ENCODE measurements at regions of chr1 and their contacts with region 1.

Region 1: GRCh38 chr1:95088303-95088702 is 15.6 kb upstream of the ALG14 start:
- DNase-seq: no peak
- H3K4me3 Mint-ChIP-seq: no peak overlapping the region
- H3K27ac Mint-ChIP-seq: no peak overlapping the region
- H3K4me1 Mint-ChIP-seq: no peaks in the 10 kb centered on the region
- H3K27me3 Mint-ChIP-seq: peaks cover 13% of the 10 kb centered on the region

Region 2: GRCh38 chr1:95057351-95057750 is 31.0 kb before region 1 on chr1:
- intact Hi-C with region 1: loop called (anchors 1 kb)
- DNase-seq: no peak
- H3K4me3 Mint-ChIP-seq: no peak overlapping the region
- H3K27ac Mint-ChIP-seq: no peak overlapping the region
- H3K4me1 Mint-ChIP-seq: no peaks in the 10 kb centered on the region
- H3K27me3 Mint-ChIP-seq: peaks cover 5% of the 10 kb centered on the region

Measured in activated T-helper 1 cell treated with anti-CD3 and anti-CD28 coated beads, Interleukin-12 subunit alpha, Interleukin-12 subunit beta, Interleukin-2, Interleukin-4 antibody, amounts not matched to agents 30 ng/mL and 10 ng/mL and 1 ng/mL, durations not matched to agents 14 hours and 24 hours and 36 hours (primary cell).